ENCODE measurements at regions of chr12 and their contacts with region 1.

Region 1: GRCh38 chr12:56839915-56840325 is 76.8 kb downstream of the HSD17B6 start:
- DNase-seq: peak; percentile 55 to 83 (median 68)
- ATAC-seq: peak; percentile 95
- H3K4me3 ChIP-seq: no peak overlapping the region
- H3K27ac ChIP-seq: no peak overlapping the region
- H3K4me1 ChIP-seq: peaks cover 3 to 7% of the 10 kb centered on the region in 2 experiments; a peak in 4 of 5 replicates
- H3K27me3 ChIP-seq: no peaks in the 10 kb centered on the region
- CTCF ChIP-seq: peak; percentile 92 to 97 (median 97)
- EP300 ChIP-seq: no peak; the same call in 1 of the 2 replicates
- POLR2A ChIP-seq: no peak
- RAD21 ChIP-seq: peak; percentile 99

Region 2: GRCh38 chr12:56333679-56334489 is 506.0 kb before region 1 on chr12 and contains the start of gene PAN2:
- CTCF ChIA-PET with region 1: no interaction called
- POLR2A ChIA-PET with region 1: no interaction called
- in situ Hi-C with region 1: no loop called
- intact Hi-C with region 1: no loop called
- DNase-seq: peak; percentile 99 to 100 (median 100)
- ATAC-seq: peak; percentile 94
- H3K4me3 ChIP-seq: peak within 1 kb of the TSS; percentile 64
- H3K27ac ChIP-seq: peak within 1 kb of the TSS; percentile 98
- H3K4me1 ChIP-seq: peaks cover 25 to 55% of the 10 kb centered on the region in 2 experiments
- H3K27me3 ChIP-seq: no peaks in the 10 kb centered on the region
- CTCF ChIP-seq: peak; percentile 47 to 70 (median 65)
- EP300 ChIP-seq: peak; percentile 3; the same call in 1 of the 2 replicates
- POLR2A ChIP-seq: peak; percentile 90
- RAD21 ChIP-seq: peak; percentile 18 to 31; a peak in 3 of 4 replicates
- polyA plus RNA-seq, gene PAN2: 15.0 to 23.9 TPM

Region 3: DNA sequence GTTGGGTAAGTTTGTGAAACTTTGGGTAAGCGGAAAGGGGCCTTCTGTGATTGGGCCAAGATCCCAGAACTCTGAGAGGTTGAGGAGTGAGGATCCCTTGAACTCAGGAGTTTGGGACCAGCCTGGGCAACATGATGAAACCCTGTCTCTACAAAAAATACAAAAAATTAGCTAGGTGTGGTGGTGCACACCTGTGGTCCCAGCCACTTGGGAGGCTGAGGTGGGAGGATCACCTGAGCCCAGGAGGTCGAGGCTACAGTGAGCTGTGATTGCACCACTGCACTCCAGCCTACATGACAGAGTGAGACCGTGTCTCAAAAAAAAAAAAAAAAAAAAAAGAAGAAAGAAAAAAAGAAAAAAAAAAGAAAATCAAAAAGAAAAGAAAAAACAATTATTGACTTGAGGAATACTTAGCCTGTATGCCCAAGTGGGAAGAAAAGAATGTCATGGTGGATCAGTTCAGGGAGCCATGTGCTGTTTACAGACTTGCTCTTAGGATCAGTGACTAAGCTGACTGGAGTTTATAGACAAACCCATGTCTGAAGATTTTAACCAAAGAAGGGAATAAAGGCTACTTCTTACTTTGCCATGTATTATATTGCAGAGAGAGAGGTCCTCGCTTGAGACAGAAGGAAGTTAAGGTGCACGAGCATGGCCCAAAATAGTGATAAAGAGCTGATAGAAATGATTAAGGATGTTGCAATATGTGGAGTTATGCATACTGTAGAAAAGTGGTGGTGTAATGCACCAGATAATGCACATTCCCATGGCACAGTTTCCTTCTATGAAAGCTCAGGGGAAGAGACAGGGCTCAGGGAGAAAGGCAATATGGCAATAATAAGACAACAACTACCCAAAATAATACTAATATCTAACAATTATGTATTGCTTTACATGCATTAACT is 75.9 kb before region 1 on chr12:
- CTCF ChIA-PET with region 1: no interaction called
- POLR2A ChIA-PET with region 1: interaction called, 3 read pairs
- in situ Hi-C with region 1: no loop called
- intact Hi-C with region 1: loop called (anchors 5 kb)
- DNase-seq: no peak
- ATAC-seq: no peak
- H3K4me3 ChIP-seq: no peak overlapping the region
- H3K27ac ChIP-seq: no peak overlapping the region
- H3K4me1 ChIP-seq: no peaks in the 10 kb centered on the region
- H3K27me3 ChIP-seq: no peaks in the 10 kb centered on the region
- CTCF ChIP-seq: no peak
- EP300 ChIP-seq: no peak
- POLR2A ChIP-seq: no peak
- RAD21 ChIP-seq: no peak

Region 4: GRCh38 chr12:56897844-56898361 is 58.0 kb after region 1 on chr12:
- CTCF ChIA-PET with region 1: no interaction called
- POLR2A ChIA-PET with region 1: interaction called, 3 read pairs
- in situ Hi-C with region 1: no loop called
- intact Hi-C with region 1: loop called (anchors 5 kb)
- DNase-seq: peak in 2 of 4 experiments; percentile 25 to 45
- ATAC-seq: peak; percentile 71
- H3K4me3 ChIP-seq: no peak overlapping the region
- H3K27ac ChIP-seq: peak overlapping the region; percentile 9; the same call in 1 of the 3 replicates
- H3K4me1 ChIP-seq: peaks cover 8 to 29% of the 10 kb centered on the region in 2 experiments
- H3K27me3 ChIP-seq: no peaks in the 10 kb centered on the region
- CTCF ChIP-seq: no peak
- EP300 ChIP-seq: no peak
- POLR2A ChIP-seq: no peak
- RAD21 ChIP-seq: no peak

Region 5: DNA sequence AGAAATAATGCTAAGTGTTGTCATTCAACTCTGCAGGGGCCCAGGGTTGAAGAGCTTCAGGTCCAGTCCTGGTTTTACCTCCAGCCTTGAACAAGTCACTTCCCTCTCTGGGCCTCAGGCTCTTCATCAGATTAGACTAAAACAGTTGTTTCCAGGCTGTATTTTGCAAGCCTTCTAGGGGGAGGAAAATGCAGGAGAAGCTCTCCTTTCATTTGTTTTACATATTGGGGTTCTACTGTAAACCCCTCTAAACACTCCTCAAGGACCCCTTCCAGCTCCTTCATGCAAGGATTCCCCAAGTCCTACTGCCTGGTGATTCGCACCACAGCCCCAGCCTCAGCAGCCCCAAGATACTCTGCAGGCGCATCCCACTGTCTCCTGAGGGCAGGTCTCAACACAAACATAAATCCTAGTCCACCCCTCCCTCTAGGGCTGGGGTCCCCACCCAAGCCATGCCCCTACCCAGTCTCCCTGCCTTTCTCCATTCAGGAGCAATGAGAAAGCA is 91.6 kb after region 1 on chr12:
- CTCF ChIA-PET with region 1: no interaction called
- POLR2A ChIA-PET with region 1: interaction called, 4 read pairs
- in situ Hi-C with region 1: no loop called
- intact Hi-C with region 1: loop called (anchors 1 kb)
- DNase-seq: peak; percentile 70 to 92 (median 74)
- ATAC-seq: peak; percentile 93
- H3K4me3 ChIP-seq: peak overlapping the region; percentile 24; the same call in 1 of the 2 replicates
- H3K27ac ChIP-seq: peak overlapping the region; percentile 82
- H3K4me1 ChIP-seq: peaks cover 34 to 46% of the 10 kb centered on the region in 2 experiments
- H3K27me3 ChIP-seq: no peaks in the 10 kb centered on the region
- CTCF ChIP-seq: no peak
- EP300 ChIP-seq: peak; percentile 90
- POLR2A ChIP-seq: no peak; the same call in 1 of the 2 replicates
- RAD21 ChIP-seq: peak in 1 of 2 experiments; percentile 23; a peak in 1 of 4 replicates

Region 6: DNA sequence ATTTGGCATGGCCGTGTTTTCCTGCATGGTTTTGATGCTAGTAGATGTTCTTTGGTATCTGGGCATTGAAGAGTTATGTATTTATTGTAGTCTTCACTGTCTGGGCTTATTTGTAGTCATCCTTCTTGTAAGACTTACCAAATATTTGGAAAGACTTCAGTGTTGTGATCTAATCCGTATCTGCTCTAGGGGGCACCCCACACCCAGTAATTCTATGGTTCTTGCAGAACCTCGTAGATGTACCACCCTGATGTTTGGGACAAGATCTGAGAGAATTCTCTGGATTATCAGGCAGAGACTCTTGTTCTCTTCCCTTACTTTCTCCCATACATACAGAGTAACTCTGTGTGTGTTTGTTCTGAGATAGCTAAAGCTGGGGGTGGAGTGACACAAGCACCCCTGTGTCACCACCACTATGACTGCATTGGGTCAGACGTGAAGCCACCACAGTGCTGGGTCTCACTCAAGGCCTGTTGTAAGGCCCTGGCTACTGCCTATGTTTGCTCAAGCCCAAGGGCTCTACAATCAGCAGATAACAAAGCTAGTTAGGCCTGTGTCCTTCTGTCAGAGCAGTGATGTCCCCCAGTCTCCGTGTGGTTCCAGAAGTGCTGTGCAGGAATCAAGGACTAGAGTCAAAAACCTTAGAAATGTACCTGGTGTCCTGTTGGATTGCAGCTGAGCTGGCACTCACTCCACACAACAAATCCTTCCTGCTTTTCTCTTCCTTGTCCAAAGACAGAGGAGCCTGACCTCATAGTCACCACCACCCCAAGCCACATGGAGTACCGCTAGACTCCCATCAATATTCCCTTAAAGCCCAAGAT is 107.9 kb after region 1 on chr12:
- CTCF ChIA-PET with region 1: no interaction called
- POLR2A ChIA-PET with region 1: no interaction called
- in situ Hi-C with region 1: no loop called
- intact Hi-C with region 1: loop called (anchors 5 kb)
- DNase-seq: peak in 2 of 4 experiments; percentile 27 to 50
- ATAC-seq: peak; percentile 84
- H3K4me3 ChIP-seq: no peak overlapping the region
- H3K27ac ChIP-seq: no peak overlapping the region; the same call in 2 of the 3 replicates
- H3K4me1 ChIP-seq: no peaks in the 10 kb centered on the region; a peak in 4 of 5 replicates
- H3K27me3 ChIP-seq: no peaks in the 10 kb centered on the region
- CTCF ChIP-seq: peak; percentile 26 to 56 (median 54); a peak in 5 of 6 replicates
- EP300 ChIP-seq: no peak
- POLR2A ChIP-seq: no peak
- RAD21 ChIP-seq: peak; percentile 36 to 78; a peak in 3 of 4 replicates

Region 7: GRCh38 chr12:56987551-56988053 is 147.7 kb after region 1 on chr12:
- CTCF ChIA-PET with region 1: interaction called, 8 read pairs
- POLR2A ChIA-PET with region 1: no interaction called
- in situ Hi-C with region 1: no loop called
- intact Hi-C with region 1: loop called (anchors 1 kb)
- DNase-seq: peak; percentile 81 to 91 (median 82)
- ATAC-seq: peak; percentile 82
- H3K4me3 ChIP-seq: peak overlapping the region; percentile 3; the same call in 1 of the 2 replicates
- H3K27ac ChIP-seq: peak overlapping the region; percentile 62
- H3K4me1 ChIP-seq: peaks cover 29 to 54% of the 10 kb centered on the region in 2 experiments
- H3K27me3 ChIP-seq: no peaks in the 10 kb centered on the region
- CTCF ChIP-seq: peak; percentile 91 to 96 (median 93)
- EP300 ChIP-seq: no peak
- POLR2A ChIP-seq: no peak
- RAD21 ChIP-seq: peak; percentile 97 to 99

Region 8: GRCh38 chr12:57182921-57183790 is 343.2 kb after region 1 on chr12:
- CTCF ChIA-PET with region 1: no interaction called
- POLR2A ChIA-PET with region 1: no interaction called
- in situ Hi-C with region 1: loop called (anchors 5 kb)
- intact Hi-C with region 1: no loop called
- DNase-seq: peak; percentile 78 to 92 (median 90)
- ATAC-seq: peak; percentile 95
- H3K4me3 ChIP-seq: no peak overlapping the region
- H3K27ac ChIP-seq: no peak overlapping the region
- H3K4me1 ChIP-seq: peaks cover 0 to 37% of the 10 kb centered on the region in 2 experiments; a peak in 3 of 5 replicates
- H3K27me3 ChIP-seq: peaks cover 56 to 87% of the 10 kb centered on the region in 2 experiments
- CTCF ChIP-seq: peak; percentile 93 to 96 (median 93)
- EP300 ChIP-seq: no peak
- POLR2A ChIP-seq: no peak
- RAD21 ChIP-seq: peak; percentile 86 to 92

Measured in K562 (cell line).